PC-3 (cell line): ENCODE measurements at regions of chr4 and their contacts with region 1.

Region 1: GRCh38 chr4:66688674-66689073 is 856.6 kb downstream of the CENPC start:
- DNase-seq: peak; percentile 67
- ATAC-seq: peak; percentile 95
- H3K4me3 ChIP-seq: no peak overlapping the region
- H3K27ac ChIP-seq: no peak overlapping the region
- H3K4me1 ChIP-seq: no peaks in the 10 kb centered on the region
- H3K27me3 ChIP-seq: no peaks in the 10 kb centered on the region
- CTCF ChIP-seq: peak; percentile 77

Region 2: GRCh38 chr4:65580551-65580950 is 1108.1 kb before region 1 on chr4:
- CTCF ChIA-PET with region 1: no interaction called
- POLR2A ChIA-PET with region 1: no interaction called
- intact Hi-C with region 1: loop called (anchors 5 kb)
- DNase-seq: peak; percentile 31
- ATAC-seq: no peak
- H3K4me3 ChIP-seq: no peak overlapping the region
- H3K27ac ChIP-seq: no peak overlapping the region
- H3K4me1 ChIP-seq: no peaks in the 10 kb centered on the region
- H3K27me3 ChIP-seq: no peaks in the 10 kb centered on the region
- CTCF ChIP-seq: peak; percentile 54

Region 3: GRCh38 chr4:66178906-66179305 is 509.8 kb before region 1 on chr4:
- CTCF ChIA-PET with region 1: no interaction called
- POLR2A ChIA-PET with region 1: no interaction called
- intact Hi-C with region 1: loop called (anchors 5 kb)
- DNase-seq: peak; percentile 80
- ATAC-seq: peak; percentile 100
- H3K4me3 ChIP-seq: no peak overlapping the region
- H3K27ac ChIP-seq: no peak overlapping the region
- H3K4me1 ChIP-seq: peaks cover 10% of the 10 kb centered on the region
- H3K27me3 ChIP-seq: no peaks in the 10 kb centered on the region
- CTCF ChIP-seq: 0 out of 2 replicates have a peak, but pooled peaks have one; percentile 17

Region 4: DNA sequence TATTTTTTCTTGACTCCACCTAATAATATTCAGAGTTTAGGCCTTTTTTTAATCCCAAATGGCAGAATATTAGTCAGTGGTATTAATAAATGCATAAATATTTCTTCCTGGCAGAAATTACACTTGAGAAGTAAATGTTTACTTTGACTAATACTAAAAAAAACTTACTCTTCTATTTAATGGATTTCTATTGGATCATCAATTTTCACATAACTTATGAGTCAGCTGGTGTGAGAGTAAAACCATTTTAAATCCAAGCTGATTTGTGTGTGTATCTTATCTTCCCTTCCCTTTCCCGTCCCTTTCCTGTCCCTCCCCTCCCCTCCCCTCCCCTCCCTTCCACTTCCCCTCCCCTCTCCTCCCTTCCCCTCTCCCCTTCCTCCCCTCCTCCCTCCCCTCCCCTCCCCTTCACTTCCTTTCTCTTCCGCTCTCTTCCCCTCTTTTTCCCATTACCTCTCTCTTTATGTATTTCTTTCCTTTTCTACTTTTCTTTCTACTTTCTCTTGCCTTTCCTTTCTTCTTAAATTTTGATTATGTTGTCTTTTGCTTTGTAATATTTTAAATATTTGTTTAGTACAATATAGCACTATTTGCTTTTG is 388.2 kb before region 1 on chr4:
- CTCF ChIA-PET with region 1: no interaction called
- POLR2A ChIA-PET with region 1: no interaction called
- intact Hi-C with region 1: loop called (anchors 5 kb)
- DNase-seq: peak; percentile 89
- ATAC-seq: peak; percentile 81
- H3K4me3 ChIP-seq: no peak overlapping the region
- H3K27ac ChIP-seq: peak overlapping the region; percentile 79
- H3K4me1 ChIP-seq: peaks cover 41% of the 10 kb centered on the region
- H3K27me3 ChIP-seq: no peaks in the 10 kb centered on the region
- CTCF ChIP-seq: no peak

Region 5: GRCh38 chr4:66972087-66972486 is 283.4 kb after region 1 on chr4:
- CTCF ChIA-PET with region 1: no interaction called
- POLR2A ChIA-PET with region 1: no interaction called
- intact Hi-C with region 1: loop called (anchors 5 kb)
- DNase-seq: peak; percentile 48
- ATAC-seq: peak; percentile 46; the same call in 1 of the 2 replicates
- H3K4me3 ChIP-seq: no peak overlapping the region
- H3K27ac ChIP-seq: no peak overlapping the region
- H3K4me1 ChIP-seq: peaks cover 13% of the 10 kb centered on the region; the same call in 1 of the 2 replicates
- H3K27me3 ChIP-seq: no peaks in the 10 kb centered on the region
- CTCF ChIP-seq: peak; percentile 44